HepG2 (cell line): ENCODE measurements at regions of chr17 and their contacts with region 1.

Region 1: GRCh38 chr17:31967648-31968047 is 30.8 kb downstream of the SUZ12 start:
- DNase-seq: no peak
- ATAC-seq: no peak
- H3K4me3 ChIP-seq: no peak overlapping the region
- H3K27ac ChIP-seq: no peak overlapping the region
- H3K4me1 ChIP-seq: 0 out of 2 replicates have a peak, but pooled peaks cover 8% of the 10 kb centered on the region
- H3K27me3 ChIP-seq: no peaks in the 10 kb centered on the region
- CTCF ChIP-seq: no peak
- EP300 ChIP-seq: no peak
- POLR2A ChIP-seq: no peak
- RAD21 ChIP-seq: no peak

Region 2: DNA sequence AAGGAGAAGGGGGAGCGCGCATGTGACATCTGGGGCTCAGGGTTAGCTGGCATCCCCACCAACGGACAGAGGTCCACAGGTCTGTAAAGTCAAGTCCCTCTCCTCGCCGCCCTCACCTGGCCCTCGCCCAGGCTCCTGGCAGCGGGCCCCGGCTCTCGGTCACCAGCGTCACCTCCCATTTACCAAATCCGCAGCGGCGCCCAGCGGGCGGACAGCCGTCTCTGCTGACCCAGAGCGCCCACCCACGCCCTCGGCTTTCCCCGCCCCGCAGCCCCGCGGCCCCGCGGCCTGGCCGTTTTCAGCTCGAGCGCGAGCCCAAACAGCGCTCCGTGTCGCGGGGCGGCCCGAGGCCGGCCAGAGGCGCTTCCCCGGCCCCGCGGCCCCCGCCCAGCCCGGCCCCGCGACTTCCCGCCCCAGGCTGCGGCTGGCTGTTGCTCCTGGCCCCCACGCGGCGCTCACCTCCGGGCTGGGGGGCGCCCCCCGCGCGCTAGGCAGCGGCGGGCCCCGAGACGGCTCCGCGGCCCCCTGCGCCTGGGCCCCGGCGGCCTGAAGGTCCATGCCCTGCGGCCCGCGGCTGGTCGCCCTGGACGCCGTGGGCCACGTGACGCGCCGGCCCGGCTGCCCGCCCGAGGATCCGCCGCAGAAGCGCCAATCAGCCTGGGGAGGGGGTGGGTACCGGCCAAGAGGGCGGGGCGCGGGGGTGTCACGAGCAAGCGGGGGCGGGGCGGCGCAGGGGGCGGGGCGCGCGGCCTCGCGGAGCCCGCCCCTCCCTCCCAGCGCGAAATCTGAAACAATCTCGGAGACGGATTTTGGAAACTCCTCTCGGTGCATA is 108.8 kb before region 1 on chr17 and contains the start of gene COPRS:
- CTCF ChIA-PET with region 1: no interaction called
- POLR2A ChIA-PET with region 1: no interaction called
- in situ Hi-C with region 1: loop called (anchors 25 kb)
- intact Hi-C with region 1: no loop called
- DNase-seq: peak; percentile 64
- ATAC-seq: peak; percentile 89
- H3K4me3 ChIP-seq: peak within 1 kb of the TSS; percentile 72 to 87 (median 84)
- H3K27ac ChIP-seq: peak within 1 kb of the TSS; percentile 52
- H3K4me1 ChIP-seq: peaks cover 34% of the 10 kb centered on the region
- H3K27me3 ChIP-seq: no peaks in the 10 kb centered on the region
- CTCF ChIP-seq: peak; percentile 53
- EP300 ChIP-seq: no peak
- POLR2A ChIP-seq: peak in 1 of 2 experiments; percentile 67; a peak in 1 of 4 replicates
- RAD21 ChIP-seq: no peak
- total RNA-seq, gene COPRS: 93.8 and 98.3 TPM in 2 replicates

Region 3: GRCh38 chr17:32015245-32016013 is 47.8 kb after region 1 on chr17:
- CTCF ChIA-PET with region 1: no interaction called
- POLR2A ChIA-PET with region 1: no interaction called
- in situ Hi-C with region 1: no loop called
- intact Hi-C with region 1: no loop called
- DNase-seq: no peak
- ATAC-seq: no peak
- H3K4me3 ChIP-seq: no peak overlapping the region
- H3K27ac ChIP-seq: no peak overlapping the region
- H3K4me1 ChIP-seq: no peaks in the 10 kb centered on the region
- H3K27me3 ChIP-seq: no peaks in the 10 kb centered on the region; a peak in 1 of 5 replicates
- CTCF ChIP-seq: no peak
- EP300 ChIP-seq: no peak
- POLR2A ChIP-seq: no peak
- RAD21 ChIP-seq: no peak

Region 4: DNA sequence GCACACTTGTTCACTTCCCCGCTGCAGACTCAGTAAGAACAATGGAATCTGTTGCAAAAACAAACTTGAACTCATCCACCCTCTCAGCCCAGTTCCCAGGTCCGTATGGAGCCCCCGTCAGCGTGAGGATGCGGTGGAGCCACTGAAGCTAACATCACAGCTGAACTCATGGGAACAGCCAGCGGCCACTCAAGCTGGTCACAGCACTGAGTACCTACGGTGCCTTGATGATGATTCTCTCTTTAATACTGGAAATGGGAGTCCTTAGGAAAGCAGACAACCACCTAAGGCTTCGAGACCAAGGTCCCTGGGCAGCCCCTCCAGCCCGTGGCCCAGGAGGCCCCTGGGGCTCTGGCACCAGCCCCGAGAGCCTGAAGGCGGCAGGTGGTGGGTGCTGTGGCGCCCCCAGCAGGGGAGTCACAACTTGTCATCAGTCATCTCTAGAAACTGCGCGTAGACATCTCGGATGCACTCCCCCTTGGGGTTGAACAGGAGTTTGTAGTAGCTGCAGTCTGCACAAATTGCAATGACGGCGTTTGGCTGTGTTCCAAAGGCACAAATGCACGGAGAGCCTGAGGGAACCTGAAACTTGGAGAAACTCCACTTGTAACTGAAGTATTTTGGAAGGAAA is 143.6 kb after region 1 on chr17:
- CTCF ChIA-PET with region 1: no interaction called
- POLR2A ChIA-PET with region 1: no interaction called
- in situ Hi-C with region 1: no loop called
- intact Hi-C with region 1: no loop called
- DNase-seq: peak; percentile 52
- ATAC-seq: peak; percentile 86
- H3K4me3 ChIP-seq: 0 out of 6 replicates have a peak overlapping the region, but pooled peaks of 1 of the 3 experiments have one; percentile 15
- H3K27ac ChIP-seq: no peak overlapping the region
- H3K4me1 ChIP-seq: peaks cover 13% of the 10 kb centered on the region
- H3K27me3 ChIP-seq: peaks cover 2 to 12% of the 10 kb centered on the region in 2 experiments; a peak in 2 of 5 replicates
- CTCF ChIP-seq: peak; percentile 54
- EP300 ChIP-seq: no peak
- POLR2A ChIP-seq: no peak
- RAD21 ChIP-seq: no peak